Cardiac septum (tissue), 1 donor: ENCODE measurements at regions of chr9 and their contacts with region 1.

Region 1: DNA sequence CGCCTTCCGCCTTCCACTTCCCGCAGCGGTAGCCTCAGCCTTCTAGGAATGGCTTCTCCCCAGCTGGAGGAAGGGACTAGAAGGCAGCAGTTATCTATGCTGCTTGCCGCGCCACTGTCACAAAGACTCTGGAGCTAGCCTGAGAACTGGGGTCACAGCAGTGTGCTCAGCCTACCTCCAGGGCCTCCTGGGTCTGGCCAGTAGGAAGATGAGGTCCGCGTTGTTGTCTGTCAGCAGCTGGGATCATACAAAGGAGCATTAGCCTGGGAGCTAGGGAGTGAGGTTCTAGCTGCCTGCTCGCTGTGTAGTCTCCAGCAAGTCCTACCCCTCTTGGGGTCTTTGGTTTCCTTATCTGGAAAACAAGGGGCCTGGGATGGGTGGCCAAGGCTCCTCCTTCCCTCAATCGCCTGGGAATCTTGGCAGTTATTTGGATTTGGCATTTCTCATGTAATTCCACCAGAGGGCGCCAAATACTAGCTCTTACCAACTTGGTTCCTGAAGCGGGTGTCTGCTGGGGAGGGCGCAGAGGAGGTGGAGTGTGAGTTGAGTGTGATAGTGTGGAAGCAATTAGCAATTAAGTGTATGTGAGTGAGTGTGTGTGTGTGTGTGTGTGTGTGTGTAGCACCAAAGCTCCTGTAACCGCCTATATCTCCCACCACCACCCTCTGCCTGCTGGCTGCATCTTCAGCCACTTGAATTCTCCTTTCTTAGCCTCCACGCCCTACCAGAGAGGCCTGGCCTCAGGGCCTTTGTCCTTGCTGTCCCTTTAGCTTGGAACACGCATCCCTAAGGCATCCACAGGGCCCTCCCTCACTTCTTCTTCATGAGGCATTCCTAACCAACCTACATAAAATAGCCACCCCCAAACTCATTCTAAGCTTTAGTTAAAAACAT is 97.1 kb downstream of the ENTREP1 start:
- DNase-seq: no peak

Region 2: DNA sequence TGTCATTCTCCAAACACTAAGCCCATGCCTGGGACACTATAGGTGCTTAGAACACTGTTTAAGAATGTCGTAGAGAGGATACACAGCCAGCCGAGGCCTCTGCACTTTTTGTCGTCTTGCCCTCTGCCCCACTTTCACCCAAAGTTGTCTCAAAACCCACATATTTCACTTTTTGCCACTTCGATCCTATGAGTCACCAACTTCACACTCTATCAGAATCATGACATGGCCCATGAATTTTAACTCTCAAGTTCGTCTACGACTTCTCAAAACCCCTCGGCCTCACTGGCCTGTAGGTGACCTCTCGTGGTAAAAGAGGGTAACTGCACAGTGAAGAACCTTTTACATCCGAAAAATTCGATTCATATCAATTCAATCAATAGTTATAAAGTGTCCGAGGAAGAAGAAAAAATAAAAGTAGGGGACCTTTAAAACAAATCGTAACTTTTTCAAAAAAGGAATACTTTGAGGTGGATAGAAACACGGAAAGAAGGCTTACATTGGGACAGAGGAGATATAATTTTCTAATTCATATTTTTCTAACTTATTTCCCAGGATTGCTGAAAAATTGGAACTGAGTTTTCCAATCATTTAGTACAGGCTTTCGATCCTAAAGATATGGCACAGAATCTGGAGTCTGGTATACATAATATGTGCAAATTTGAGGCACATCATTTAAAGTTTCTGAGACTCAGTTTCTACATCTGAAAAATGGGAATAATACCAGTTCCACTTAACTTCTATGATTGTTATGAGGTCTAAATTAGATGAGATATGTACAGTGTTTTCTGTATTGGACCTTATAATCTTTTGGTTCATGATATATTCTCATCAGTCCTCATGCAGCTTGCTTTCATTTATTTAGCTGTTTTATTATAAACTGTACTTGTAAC is 127.4 kb after region 1 on chr9:
- intact Hi-C with region 1: loop called (anchors 2 kb)
- DNase-seq: no peak

Region 3: DNA sequence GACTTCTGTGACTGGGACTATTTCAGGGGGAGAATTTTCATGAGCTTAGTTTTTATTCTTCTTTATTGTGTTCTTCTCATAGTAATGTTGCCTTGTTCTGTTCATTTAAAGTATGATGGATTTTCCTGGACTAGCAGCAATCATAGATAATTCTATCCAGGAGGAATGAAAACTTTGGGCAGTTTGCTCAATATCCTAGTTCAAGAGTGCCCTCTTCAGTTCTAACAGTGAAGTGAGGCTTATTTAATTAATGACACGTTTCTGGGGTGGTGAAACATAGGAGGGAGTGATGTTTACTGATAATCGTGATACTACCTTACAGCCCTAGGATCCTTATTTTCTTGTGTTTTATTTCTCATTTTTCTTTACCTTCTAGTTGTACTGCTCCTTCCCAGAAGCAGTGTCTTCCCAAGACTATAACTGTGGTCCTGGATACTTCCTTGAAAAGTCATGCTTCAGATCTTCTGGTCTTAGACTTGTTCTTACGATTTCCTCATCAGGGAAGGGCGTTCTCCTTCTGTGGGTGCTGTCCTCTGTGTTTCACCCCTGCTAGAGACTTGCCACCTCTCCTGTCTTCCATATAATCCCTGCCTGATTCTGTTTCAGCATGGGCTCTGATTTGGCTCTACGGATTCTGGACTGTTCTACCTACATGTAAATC is 455.8 kb after region 1 on chr9:
- intact Hi-C with region 1: loop called (anchors 2 kb)
- DNase-seq: no peak